WTC11 (cell line): ENCODE measurements at regions of chr11 and their contacts with region 1.

Region 1: DNA sequence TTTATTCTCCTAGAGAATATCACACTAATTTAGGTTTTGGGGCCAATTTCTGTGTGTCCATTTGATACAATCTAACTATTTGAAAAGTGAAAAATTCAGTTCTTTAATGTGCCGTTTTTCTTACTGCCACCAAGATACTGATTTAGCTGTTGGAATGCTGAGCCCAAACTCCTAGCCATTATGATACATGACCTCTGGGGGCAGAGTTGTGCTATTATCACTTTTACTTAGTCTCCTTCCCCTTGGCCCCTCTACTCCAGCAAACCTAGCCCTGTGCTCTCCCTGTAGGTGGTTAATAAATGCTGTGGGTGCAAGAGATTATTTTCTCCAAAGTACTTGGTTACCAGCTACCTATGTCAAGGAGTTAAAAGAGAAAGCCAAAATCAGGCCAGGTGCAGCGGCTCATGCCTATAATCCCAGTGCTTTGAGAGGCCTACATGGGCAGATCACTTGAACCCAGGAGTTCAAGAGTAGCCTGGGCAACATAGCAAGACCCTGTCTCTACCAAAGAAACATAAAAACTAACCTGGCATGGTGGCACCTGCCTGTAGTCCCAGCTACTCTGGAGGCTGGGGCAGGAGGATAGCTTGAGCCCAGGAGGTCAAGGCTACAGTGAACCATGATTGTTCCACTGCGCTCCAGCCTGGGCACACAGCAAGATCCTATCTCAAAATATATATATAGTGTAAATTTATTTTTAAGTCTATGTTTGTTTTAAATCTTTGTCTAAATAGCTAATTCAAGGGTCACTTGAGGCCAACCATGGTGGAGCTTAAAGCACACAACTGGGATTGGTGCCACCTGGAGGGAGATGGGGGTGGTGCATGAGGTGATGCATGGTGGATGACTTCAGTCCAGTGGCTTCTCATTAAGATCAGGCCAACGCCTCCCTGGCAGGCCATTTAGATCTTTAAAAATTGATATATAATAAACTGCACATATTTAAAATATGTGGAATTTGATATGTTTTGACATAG is 193.2 kb upstream of the PLET1 start:
- DNase-seq: peak; percentile 67
- ATAC-seq: peak; percentile 84
- H3K4me3 Mint-ChIP-seq: no peak overlapping the region
- H3K27ac Mint-ChIP-seq: no peak overlapping the region
- H3K4me1 Mint-ChIP-seq: peaks cover 9% of the 10 kb centered on the region
- H3K27me3 Mint-ChIP-seq: peaks cover 21% of the 10 kb centered on the region
- CTCF ChIP-seq: peak; percentile 18; the same call in 1 of the 2 replicates

Region 2: DNA sequence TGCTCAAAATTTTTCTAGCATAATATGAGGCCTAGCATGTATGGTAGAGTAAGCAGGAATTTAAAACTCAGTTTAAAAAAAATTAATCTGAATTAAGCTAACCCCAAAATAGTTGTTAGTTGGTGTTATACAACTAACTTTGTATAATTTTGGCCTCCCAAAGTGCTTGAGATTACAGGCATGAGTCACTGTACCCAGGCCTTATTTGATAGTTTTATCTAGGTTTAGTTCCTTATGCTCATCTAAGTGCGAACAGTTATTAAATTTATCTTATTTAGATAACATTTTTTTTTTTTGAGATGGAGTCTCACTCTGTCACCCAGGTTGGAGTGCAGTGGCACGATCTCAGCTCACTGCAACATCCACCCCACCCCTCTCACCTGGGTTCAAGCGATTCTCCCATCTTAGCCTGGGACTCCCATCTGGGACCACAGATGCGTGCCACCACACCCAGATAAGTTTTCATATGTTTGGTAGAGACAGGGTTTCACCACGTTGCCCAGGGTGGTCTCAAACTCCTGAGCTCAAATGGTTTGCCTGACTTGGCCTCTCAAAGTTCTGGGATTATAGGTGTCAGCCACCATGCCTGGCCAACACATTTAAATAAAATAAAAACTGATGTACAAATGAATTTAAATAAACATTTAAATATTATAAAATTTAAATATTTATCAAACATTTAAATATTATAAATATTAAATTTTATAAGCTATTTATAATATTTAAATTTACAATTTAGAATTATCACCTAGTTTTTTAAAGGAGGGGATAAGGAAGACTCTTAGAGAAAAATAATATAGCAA is 297.5 kb before region 1 on chr11:
- CTCF ChIA-PET with region 1: no interaction called
- POLR2A ChIA-PET with region 1: no interaction called
- DNase-seq: no peak
- ATAC-seq: no peak
- H3K4me3 Mint-ChIP-seq: no peak overlapping the region
- H3K27ac Mint-ChIP-seq: no peak overlapping the region
- H3K4me1 Mint-ChIP-seq: 0 out of 2 replicates have a peak, but pooled peaks cover 2% of the 10 kb centered on the region
- H3K27me3 Mint-ChIP-seq: no peaks in the 10 kb centered on the region
- CTCF ChIP-seq: no peak

Region 3: DNA sequence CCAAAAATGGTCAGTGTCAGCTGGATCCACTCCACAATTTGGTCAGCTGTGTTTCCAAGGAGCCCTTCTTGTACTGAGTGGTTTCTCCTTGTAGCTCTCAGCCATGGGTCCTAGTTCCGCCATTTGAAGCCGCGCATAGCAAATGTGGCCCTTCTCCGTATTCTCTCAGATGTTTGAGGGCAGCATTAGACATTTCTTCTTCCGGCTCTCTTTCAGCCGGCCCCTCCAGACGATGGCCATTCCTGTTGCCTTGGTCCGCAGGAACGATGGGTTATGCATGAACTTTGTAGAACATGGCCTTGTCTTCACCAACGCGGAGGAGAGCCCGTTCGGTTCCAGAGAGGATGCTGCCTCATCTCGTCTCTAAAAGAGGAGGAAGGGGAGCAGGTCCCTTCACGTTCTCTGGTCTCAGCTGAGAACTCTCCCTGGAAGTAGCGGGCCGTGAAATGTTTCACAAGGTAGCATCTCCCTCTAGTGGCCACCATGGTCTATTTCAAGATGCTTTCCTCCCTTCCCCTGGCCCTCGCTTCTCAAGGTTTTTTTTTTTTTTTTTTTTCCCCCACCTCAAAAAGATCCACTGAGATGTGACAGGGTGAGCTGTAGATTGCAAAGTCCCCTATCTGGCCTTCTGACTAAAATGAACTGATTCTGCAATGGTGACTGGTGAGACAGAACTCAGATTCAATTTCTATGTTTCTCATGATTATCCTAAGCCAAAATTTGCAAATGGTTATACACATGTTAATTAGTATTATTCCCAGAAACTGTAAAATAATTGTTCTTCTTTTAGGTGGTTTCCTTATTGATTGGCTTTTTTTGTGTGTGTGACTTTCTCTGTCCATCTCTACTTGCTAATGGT is 173.4 kb before region 1 on chr11:
- CTCF ChIA-PET with region 1: interaction called, 22 read pairs
- POLR2A ChIA-PET with region 1: no interaction called
- DNase-seq: peak; percentile 50
- ATAC-seq: peak; percentile 73
- H3K4me3 Mint-ChIP-seq: peak overlapping the region; percentile 83
- H3K27ac Mint-ChIP-seq: no peak overlapping the region
- H3K4me1 Mint-ChIP-seq: peaks cover 18% of the 10 kb centered on the region
- H3K27me3 Mint-ChIP-seq: no peaks in the 10 kb centered on the region; the same call in 1 of the 2 replicates
- CTCF ChIP-seq: peak; percentile 52

Region 4: DNA sequence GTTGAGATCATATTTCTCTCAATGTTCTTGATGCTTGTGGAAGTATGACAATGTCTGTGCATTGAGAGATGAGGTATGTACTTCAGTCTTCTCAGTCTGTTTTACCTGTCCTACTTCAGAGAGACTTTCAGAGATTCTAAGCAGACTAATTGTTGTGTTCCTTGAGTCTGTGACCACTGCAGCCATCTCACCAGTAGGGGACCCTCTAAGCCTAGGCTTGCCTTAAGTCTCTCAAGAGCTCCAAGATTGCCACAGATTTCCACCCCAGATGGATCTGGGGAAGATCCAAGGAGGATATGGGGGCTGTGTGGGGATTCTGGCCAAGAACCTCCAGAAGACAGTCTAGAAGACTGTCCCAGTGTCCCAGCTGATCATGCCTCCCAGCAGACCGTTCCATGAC is 13.4 kb before region 1 on chr11:
- CTCF ChIA-PET with region 1: interaction called, 37 read pairs
- POLR2A ChIA-PET with region 1: no interaction called
- DNase-seq: peak; percentile 62
- ATAC-seq: peak; percentile 96
- H3K4me3 Mint-ChIP-seq: no peak overlapping the region
- H3K27ac Mint-ChIP-seq: no peak overlapping the region
- H3K4me1 Mint-ChIP-seq: peaks cover 4% of the 10 kb centered on the region
- H3K27me3 Mint-ChIP-seq: peaks cover 4% of the 10 kb centered on the region
- CTCF ChIP-seq: peak; percentile 67

Region 5: DNA sequence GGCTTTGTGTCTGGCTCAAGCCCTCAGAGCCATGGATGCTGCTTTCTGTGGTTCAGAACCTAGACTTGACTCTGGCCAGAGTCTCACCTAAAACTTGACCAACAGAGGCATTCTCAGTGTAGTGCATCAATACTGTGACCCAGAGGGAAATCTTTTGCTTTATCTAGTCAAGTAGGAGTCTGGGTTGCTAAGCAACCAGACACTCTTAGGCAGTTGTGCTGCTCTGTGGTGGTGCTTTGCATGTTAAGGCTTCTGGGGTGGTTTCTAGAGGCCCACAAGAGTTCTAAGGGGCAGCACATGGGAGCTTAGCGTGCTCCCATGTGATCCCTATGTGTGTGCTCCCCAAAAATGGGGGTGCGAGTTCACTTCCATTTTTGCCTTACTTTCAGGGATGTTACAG is 31.4 kb after region 1 on chr11:
- CTCF ChIA-PET with region 1: interaction called, 11 read pairs
- POLR2A ChIA-PET with region 1: no interaction called
- DNase-seq: no peak
- ATAC-seq: no peak
- H3K4me3 Mint-ChIP-seq: no peak overlapping the region
- H3K27ac Mint-ChIP-seq: no peak overlapping the region
- H3K4me1 Mint-ChIP-seq: no peaks in the 10 kb centered on the region
- H3K27me3 Mint-ChIP-seq: peaks cover 6% of the 10 kb centered on the region
- CTCF ChIP-seq: no peak

Region 6: DNA sequence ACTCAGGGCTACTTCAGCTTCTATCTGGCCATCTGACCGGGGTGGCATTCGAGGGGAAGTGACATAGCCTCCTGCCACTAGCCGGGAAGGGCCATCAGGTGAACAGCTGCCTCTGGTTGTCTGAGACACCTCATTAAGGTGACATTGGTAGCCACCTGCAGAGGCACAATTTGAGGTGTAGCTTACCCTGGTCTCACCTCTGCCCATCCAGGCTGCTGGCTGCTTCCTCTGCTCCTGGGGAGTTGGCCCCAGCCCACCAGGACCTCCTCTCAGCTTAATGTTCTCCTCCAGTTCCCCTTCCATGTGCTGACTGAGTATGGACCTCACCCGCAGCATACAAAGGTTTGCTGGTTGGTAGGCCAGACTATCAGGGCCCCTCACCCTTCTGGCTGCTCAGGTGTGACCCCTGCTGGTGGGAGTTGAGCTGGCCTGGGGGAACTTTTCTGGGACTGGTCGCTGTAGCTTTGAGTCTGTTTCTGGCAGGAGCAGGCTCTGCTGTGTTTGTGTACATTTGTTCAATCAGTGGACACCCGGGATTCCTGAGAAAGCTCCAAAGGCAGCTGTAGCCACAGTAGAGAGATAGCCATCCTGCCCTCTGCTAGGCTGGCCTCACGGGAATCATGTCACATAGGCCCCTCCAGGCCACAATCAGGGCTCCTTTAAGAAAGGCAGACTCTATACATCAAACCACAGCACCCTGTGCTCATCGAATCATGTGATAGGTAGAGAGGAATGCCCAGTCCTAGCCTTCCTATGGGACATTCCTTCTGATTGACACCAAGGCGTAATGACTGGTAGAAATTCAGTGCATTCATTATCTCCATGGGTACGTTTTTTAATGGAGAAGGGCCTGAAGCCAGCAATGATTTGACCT is 101.8 kb after region 1 on chr11:
- CTCF ChIA-PET with region 1: interaction called, 36 read pairs
- POLR2A ChIA-PET with region 1: no interaction called
- DNase-seq: peak; percentile 86
- ATAC-seq: peak; percentile 93
- H3K4me3 Mint-ChIP-seq: no peak overlapping the region
- H3K27ac Mint-ChIP-seq: no peak overlapping the region
- H3K4me1 Mint-ChIP-seq: peaks cover 12% of the 10 kb centered on the region
- H3K27me3 Mint-ChIP-seq: no peaks in the 10 kb centered on the region; the same call in 1 of the 2 replicates
- CTCF ChIP-seq: peak; percentile 57

Region 7: GRCh38 chr11:112613051-112613972 is 159.4 kb after region 1 on chr11:
- CTCF ChIA-PET with region 1: no interaction called
- POLR2A ChIA-PET with region 1: no interaction called
- DNase-seq: no peak
- ATAC-seq: no peak
- H3K4me3 Mint-ChIP-seq: no peak overlapping the region
- H3K27ac Mint-ChIP-seq: no peak overlapping the region
- H3K4me1 Mint-ChIP-seq: peaks cover 31% of the 10 kb centered on the region
- H3K27me3 Mint-ChIP-seq: no peaks in the 10 kb centered on the region; the same call in 1 of the 2 replicates
- CTCF ChIP-seq: no peak

Region 8: GRCh38 chr11:112724496-112724790 is 270.6 kb after region 1 on chr11:
- CTCF ChIA-PET with region 1: no interaction called
- POLR2A ChIA-PET with region 1: no interaction called
- DNase-seq: no peak
- ATAC-seq: no peak
- H3K4me3 Mint-ChIP-seq: no peak overlapping the region
- H3K27ac Mint-ChIP-seq: no peak overlapping the region
- H3K4me1 Mint-ChIP-seq: 0 out of 2 replicates have a peak, but pooled peaks cover 2% of the 10 kb centered on the region
- H3K27me3 Mint-ChIP-seq: no peaks in the 10 kb centered on the region
- CTCF ChIP-seq: no peak

Region 9: DNA sequence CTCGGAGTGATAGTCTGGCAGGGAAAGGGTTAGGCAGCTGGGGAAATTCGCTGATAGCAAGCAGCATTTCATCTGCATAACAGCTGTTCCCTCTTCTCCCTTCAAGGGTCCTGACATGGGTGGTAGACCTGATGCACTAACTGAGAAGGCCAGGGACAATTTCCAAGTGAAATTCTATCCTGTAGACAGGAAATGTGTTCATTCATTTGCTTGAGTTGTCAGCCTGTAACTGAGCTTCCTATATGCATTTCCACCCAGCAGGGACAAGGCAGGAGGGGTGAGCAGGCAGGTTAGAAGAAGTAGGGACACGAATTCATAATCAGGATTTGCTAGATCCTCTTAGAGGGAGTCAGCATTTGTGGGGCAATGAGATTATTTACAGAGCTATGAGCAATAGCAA is 353.0 kb after region 1 on chr11:
- CTCF ChIA-PET with region 1: no interaction called
- POLR2A ChIA-PET with region 1: no interaction called
- DNase-seq: no peak
- ATAC-seq: peak; percentile 60
- H3K4me3 Mint-ChIP-seq: no peak overlapping the region
- H3K27ac Mint-ChIP-seq: no peak overlapping the region; the same call in 1 of the 2 replicates
- H3K4me1 Mint-ChIP-seq: peaks cover 25% of the 10 kb centered on the region
- H3K27me3 Mint-ChIP-seq: peaks cover 9% of the 10 kb centered on the region
- CTCF ChIP-seq: no peak

Region 10: DNA sequence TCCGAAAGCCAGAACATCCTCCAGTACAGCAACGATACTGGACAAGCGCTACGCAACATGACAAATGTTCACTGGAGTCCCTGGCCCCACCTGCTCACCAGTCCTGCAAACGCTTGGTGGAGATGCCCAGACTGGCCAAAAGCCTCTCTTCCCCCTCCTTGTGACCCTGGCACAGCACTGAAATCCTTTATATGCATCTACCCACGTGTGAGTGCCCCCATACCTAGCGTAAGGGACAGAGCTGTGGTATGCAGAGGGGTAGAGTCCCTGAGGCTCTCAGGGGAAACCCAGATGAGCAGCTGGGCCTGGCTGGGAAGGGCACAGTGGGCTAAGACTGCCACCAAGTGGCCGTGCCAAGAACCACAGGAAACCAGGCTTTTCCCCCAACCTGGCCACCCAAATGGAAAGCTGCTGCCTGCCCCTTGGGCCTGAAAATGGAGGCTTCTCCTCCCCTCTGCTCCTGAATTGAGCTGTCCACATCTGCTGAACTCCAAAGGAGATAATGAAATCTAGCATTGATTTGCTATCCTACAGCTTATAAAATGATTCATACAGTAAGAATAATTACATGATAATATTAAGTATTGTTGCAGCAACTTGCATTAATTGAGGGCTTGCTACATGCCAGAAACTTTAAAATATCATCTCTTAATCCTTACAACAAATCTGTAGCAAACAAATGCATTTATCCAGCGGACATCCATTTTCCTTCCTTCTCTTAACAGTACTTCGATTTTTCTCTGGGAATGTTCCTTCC is 835.7 kb after region 1 on chr11:
- CTCF ChIA-PET with region 1: interaction called, 11 read pairs
- POLR2A ChIA-PET with region 1: no interaction called
- DNase-seq: peak; percentile 81
- ATAC-seq: peak; percentile 98
- H3K4me3 Mint-ChIP-seq: no peak overlapping the region
- H3K27ac Mint-ChIP-seq: no peak overlapping the region
- H3K4me1 Mint-ChIP-seq: peaks cover 5% of the 10 kb centered on the region
- H3K27me3 Mint-ChIP-seq: no peaks in the 10 kb centered on the region; the same call in 1 of the 2 replicates
- CTCF ChIP-seq: peak; percentile 86